HAP-1 (cell line): ENCODE measurements at regions of chr2 and their contacts with region 1.

Region 1: GRCh38 chr2:166539340-166540162 is 45.5 kb upstream of the SCN7A start:
- DNase-seq: peak; percentile 55 to 60
- H3K4me3 ChIP-seq: no peak overlapping the region
- H3K4me1 ChIP-seq: no peaks in the 10 kb centered on the region
- H3K27me3 ChIP-seq: no peaks in the 10 kb centered on the region

Region 2: GRCh38 chr2:167462379-167462778 is 922.8 kb after region 1 on chr2:
- in situ Hi-C with region 1: no loop called
- DNase-seq: no peak
- H3K4me3 ChIP-seq: no peak overlapping the region
- H3K4me1 ChIP-seq: no peaks in the 10 kb centered on the region
- H3K27me3 ChIP-seq: no peaks in the 10 kb centered on the region

Region 3: DNA sequence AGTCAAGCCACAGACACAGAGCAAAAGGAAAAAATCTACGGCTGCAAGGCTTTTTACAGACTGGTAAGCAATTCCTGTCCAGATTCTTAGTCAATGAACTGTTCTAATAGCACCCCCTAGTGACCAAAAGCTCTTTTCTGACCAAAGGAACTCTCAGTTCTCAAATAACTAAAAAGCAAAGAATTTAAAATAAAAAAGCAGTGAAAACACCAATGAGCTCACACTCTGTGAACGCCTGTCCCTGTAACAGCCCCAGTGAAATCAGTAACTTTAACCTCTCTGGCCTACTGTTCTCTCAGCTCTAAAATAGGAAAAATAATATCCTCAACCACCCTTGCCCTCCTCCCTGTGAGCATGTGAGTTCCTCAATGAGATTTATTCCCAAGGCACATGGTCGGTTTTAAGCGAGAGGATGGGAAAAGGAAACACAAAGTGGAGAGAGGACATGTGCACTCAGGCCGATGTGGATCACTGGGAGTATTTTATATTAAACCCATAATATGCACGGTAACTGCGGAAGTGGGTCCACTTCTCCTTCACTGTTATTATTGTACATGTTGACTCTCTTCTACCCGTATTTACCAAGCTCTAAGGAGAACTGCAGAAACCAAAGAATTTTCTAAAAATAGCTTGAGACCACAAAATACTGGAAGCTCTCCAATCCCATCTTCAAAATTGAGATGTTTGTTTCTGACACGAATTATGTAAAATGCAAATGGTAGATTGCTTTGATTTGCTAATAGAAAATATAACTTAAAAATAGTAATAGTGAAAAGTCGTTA is 1579.4 kb after region 1 on chr2:
- in situ Hi-C with region 1: loop called (anchors 25 kb)
- DNase-seq: peak; percentile 57 to 59
- H3K4me3 ChIP-seq: no peak overlapping the region
- H3K4me1 ChIP-seq: peaks cover 4% of the 10 kb centered on the region; the same call in 1 of the 2 replicates
- H3K27me3 ChIP-seq: no peaks in the 10 kb centered on the region